Common myeloid progenitor, CD34-positive (primary cell): ENCODE measurements at regions of chr1 and their contacts with region 1.

Region 1: GRCh38 chr1:112390775-112391602 is 5.0 kb upstream of the CTTNBP2NL start:
- DNase-seq: peak; percentile 84 to 93 (median 90)
- H3K4me3 ChIP-seq: peak overlapping the region in 6 of 7 experiments; percentile 35 to 75 (median 52)
- H3K27ac ChIP-seq: no peak overlapping the region
- H3K4me1 ChIP-seq: peaks cover 5 to 28% (median 22%) of the 10 kb centered on the region in 4 experiments
- H3K27me3 ChIP-seq: peaks cover 0 to 5% (median 0%) of the 10 kb centered on the region in 5 experiments

Region 2: DNA sequence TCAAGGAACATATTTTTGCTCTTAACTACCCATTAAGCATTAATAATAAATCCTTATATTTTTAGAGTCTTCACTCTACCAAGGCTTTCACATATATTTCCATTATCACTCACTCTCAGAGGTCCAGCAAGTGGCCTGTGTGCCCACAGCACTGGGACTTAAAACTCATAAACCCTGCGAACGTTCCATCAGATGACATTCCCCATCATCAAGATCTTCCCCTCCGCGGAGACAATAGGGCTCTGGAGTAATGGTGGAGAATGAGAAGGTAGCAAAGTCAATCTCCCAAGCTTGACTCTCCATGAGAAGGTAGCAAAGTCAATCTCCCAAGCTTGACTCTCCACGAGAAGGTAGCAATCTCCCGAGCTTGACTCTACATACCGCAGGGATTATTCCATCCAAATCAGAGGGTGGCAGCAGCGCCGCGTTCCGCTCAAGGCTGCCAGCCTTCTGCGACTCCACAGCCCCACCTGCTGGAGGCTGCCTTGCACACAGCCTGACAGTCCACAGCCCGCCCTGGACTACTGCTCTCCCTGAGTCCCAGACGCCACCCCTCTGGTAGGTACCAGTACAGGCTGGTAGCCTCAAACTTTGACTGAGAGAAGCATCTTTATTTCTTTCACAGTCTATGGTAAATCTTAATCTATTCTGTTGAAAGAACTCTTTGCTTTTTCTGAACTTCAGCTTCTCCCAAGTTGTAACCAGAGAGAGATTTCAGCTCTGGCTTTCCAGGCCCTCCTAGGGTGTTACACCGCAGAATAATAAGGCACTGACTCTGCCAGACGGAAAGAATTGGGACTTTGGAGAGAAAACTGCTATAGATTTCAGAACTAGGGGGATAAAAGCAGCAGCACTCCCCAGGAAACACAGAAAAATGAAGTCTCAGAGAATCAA is 21.4 kb before region 1 on chr1:
- CTCF ChIA-PET with region 1: interaction called, 11 read pairs
- POLR2A ChIA-PET with region 1: no interaction called
- DNase-seq: peak; percentile 83 to 89 (median 87)
- H3K4me3 ChIP-seq: no peak overlapping the region
- H3K27ac ChIP-seq: no peak overlapping the region
- H3K4me1 ChIP-seq: no peaks in the 10 kb centered on the region
- H3K27me3 ChIP-seq: peaks cover 3 to 13% (median 9%) of the 10 kb centered on the region in 5 experiments

Region 3: GRCh38 chr1:112457241-112457640 is 66.3 kb after region 1 on chr1:
- CTCF ChIA-PET with region 1: interaction called, 78 read pairs
- POLR2A ChIA-PET with region 1: no interaction called
- DNase-seq: no peak
- H3K4me3 ChIP-seq: no peak overlapping the region
- H3K27ac ChIP-seq: no peak overlapping the region
- H3K4me1 ChIP-seq: no peaks in the 10 kb centered on the region
- H3K27me3 ChIP-seq: no peaks in the 10 kb centered on the region

Region 4: GRCh38 chr1:112466078-112466660 is 75.2 kb after region 1 on chr1:
- CTCF ChIA-PET with region 1: interaction called, 78 read pairs
- POLR2A ChIA-PET with region 1: interaction called, 3 read pairs
- DNase-seq: peak; percentile 90 to 93 (median 93)
- H3K4me3 ChIP-seq: peak overlapping the region; percentile 20 to 83 (median 66)
- H3K27ac ChIP-seq: no peak overlapping the region
- H3K4me1 ChIP-seq: peaks cover 0 to 9% (median 7%) of the 10 kb centered on the region in 4 experiments
- H3K27me3 ChIP-seq: no peaks in the 10 kb centered on the region

Region 5: GRCh38 chr1:112599476-112599875 is 208.5 kb after region 1 on chr1:
- CTCF ChIA-PET with region 1: no interaction called
- POLR2A ChIA-PET with region 1: no interaction called
- DNase-seq: no peak
- H3K4me3 ChIP-seq: no peak overlapping the region
- H3K27ac ChIP-seq: no peak overlapping the region
- H3K4me1 ChIP-seq: no peaks in the 10 kb centered on the region
- H3K27me3 ChIP-seq: no peaks in the 10 kb centered on the region

Region 6: DNA sequence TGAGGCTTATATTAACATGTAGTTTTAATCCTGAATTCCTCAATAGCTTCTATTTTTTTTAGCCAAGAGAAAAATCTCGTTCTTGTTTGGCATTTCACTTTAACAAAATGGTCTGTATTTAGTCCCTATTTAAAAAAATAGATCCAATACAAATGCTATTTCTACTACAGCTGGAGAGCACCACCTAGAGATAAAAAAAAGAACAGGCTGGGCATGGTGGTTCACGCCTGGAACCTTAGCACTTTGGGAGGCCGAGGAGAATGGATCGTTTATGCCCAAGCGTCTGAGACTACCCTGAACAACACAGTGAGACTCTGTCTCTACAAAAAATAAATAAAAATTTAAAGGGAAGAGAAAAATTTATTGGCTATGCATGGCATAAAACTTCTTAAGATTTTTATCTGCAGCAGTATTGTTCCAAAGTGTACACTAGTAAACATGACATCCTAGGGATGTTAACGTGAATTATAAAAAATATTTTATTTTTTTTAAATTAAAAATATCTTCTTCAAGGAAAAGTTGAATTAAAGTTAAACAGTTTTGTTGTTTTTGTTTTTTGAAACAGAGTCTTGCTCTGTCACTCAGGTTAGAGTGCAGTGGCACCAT is 223.6 kb after region 1 on chr1:
- CTCF ChIA-PET with region 1: interaction called, 29 read pairs
- POLR2A ChIA-PET with region 1: interaction called, 4 read pairs
- DNase-seq: peak; percentile 52 to 73 (median 71)
- H3K4me3 ChIP-seq: no peak overlapping the region
- H3K27ac ChIP-seq: no peak overlapping the region
- H3K4me1 ChIP-seq: peaks cover 7 to 16% (median 8%) of the 10 kb centered on the region in 4 experiments
- H3K27me3 ChIP-seq: no peaks in the 10 kb centered on the region

Region 7: GRCh38 chr1:112706908-112707663 is 316.1 kb after region 1 on chr1 and contains the start of gene RHOC:
- CTCF ChIA-PET with region 1: interaction called, 13 read pairs
- POLR2A ChIA-PET with region 1: interaction called, 3 read pairs
- DNase-seq: peak; percentile 56 to 75 (median 57)
- H3K4me3 ChIP-seq: peak within 1 kb of the TSS; percentile 54 to 86 (median 76)
- H3K27ac ChIP-seq: peak within 1 kb of the TSS in 1 of 2 experiments; percentile 76
- H3K4me1 ChIP-seq: peaks cover 6 to 42% (median 33%) of the 10 kb centered on the region in 4 experiments
- H3K27me3 ChIP-seq: peaks cover 0 to 4% (median 2%) of the 10 kb centered on the region in 5 experiments